ENCODE measurements at regions of chr10 and their contacts with region 1.

Region 1: DNA sequence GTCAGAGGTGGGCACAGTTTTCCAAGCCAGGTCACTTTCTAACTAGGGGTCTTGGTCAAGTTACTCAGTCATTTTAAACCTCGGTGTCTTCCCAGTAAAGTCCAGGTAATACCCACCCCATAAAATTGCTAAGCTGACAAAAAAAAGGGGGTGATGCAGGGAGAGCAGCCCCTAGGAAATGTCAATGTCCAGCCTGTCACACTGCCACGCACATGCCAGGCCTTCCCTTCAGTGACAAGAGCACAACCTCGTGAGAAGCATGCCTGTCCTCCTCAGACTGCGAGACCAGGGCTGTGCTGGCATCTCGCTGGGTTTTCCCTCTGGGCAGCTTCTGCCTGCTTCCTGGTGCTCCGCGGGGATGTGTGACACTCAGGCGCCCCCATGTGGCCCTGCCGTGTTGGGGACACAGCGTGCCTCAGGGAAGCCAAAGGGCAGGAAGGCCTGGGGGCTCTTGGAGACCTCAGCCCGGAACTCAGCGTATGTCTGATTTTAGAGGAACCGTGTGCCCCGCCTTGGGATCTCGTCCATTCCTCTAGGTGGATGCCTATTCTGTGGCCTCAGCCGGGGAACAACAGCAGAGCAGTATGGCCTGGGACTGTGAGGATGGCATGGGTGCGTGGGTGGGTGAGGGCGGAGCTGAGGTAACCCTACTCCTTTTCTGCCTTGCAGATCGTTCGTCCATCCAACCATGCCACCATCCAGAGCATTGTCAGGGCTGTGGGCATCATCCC is 10.2 kb upstream of the GDF2 start:
- DNase-seq: peak; percentile 73
- H3K27ac ChIP-seq: no peak overlapping the region
- CTCF ChIP-seq: peak; percentile 68

Region 2: DNA sequence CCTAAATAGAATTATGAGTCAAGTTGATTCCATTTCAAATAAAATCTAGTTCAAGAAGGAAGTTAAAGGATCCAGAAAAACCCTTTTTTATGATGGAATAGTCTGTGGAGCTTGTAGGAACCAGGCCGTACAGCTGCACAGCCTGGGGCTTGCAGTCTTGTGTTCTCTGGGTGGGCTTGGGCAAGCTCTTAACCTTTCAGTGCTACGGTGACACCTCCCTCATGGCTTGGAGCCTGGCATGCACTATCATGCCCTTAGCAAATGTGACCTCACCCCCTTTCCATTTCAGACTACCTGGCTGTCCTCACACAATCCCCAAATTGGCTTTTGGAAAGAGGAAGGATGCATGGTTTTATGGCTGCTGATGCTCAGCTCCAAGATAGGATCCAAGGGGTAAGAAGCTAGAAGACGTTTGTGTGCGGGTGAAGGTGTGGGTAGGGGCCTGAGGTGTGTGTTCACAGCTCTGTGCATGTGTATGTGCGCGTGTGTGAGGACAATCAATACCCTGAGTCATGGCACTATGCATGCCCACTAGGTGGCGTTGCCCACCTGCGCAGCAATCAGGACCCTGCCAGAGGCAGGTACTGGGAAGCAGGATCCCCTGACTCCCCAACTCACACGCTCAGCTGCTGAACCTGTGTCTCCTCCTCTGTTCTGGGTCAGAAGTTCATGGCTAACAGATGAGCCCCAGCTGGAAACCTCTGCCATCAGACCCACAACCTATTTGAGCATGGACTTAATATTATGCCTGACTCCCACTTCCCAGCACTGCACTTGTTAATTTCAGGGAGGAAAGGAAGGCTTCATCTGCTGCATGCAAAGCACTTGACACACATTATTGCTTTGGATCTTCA is 287.5 kb before region 1 on chr10:
- CTCF ChIA-PET with region 1: interaction called, 60 read pairs
- POLR2A ChIA-PET with region 1: no interaction called
- DNase-seq: peak; percentile 79
- H3K27ac ChIP-seq: no peak overlapping the region
- CTCF ChIP-seq: peak; percentile 91

Region 3: GRCh38 chr10:47047671-47048525 is 264.2 kb before region 1 on chr10:
- CTCF ChIA-PET with region 1: interaction called, 35 read pairs
- POLR2A ChIA-PET with region 1: no interaction called
- DNase-seq: peak; percentile 42
- H3K27ac ChIP-seq: no peak overlapping the region
- CTCF ChIP-seq: peak; percentile 63

Region 4: GRCh38 chr10:47329855-47330254 is 17.8 kb after region 1 on chr10:
- CTCF ChIA-PET with region 1: no interaction called
- POLR2A ChIA-PET with region 1: no interaction called
- DNase-seq: no peak
- H3K27ac ChIP-seq: no peak overlapping the region
- CTCF ChIP-seq: no peak